ENCODE measurements at regions of chr17 and their contacts with region 1.

Region 1: GRCh38 chr17:50547035-50547735 is at the start of gene SPATA20:
- DNase-seq: peak; percentile 78 to 92
- H3K4me3 ChIP-seq: peak within 1 kb of the TSS; percentile 32 to 67 (median 57)
- H3K27ac ChIP-seq: no peak within 1 kb of the TSS; the same call in 1 of the 2 replicates
- H3K4me1 ChIP-seq: peaks cover 6 to 20% (median 13%) of the 10 kb centered on the region in 4 experiments
- H3K27me3 ChIP-seq: no peaks in the 10 kb centered on the region
- CTCF ChIP-seq: peak; percentile 94 to 97 (median 96)
- EP300 ChIP-seq: no peak
- POLR2A ChIP-seq: peak in 1 of 2 experiments; percentile 83; a peak in 2 of 3 replicates
- RAD21 ChIP-seq: peak; percentile 99
- total RNA-seq, gene SPATA20: 16.2 and 16.7 TPM in 2 replicates

Region 2: DNA sequence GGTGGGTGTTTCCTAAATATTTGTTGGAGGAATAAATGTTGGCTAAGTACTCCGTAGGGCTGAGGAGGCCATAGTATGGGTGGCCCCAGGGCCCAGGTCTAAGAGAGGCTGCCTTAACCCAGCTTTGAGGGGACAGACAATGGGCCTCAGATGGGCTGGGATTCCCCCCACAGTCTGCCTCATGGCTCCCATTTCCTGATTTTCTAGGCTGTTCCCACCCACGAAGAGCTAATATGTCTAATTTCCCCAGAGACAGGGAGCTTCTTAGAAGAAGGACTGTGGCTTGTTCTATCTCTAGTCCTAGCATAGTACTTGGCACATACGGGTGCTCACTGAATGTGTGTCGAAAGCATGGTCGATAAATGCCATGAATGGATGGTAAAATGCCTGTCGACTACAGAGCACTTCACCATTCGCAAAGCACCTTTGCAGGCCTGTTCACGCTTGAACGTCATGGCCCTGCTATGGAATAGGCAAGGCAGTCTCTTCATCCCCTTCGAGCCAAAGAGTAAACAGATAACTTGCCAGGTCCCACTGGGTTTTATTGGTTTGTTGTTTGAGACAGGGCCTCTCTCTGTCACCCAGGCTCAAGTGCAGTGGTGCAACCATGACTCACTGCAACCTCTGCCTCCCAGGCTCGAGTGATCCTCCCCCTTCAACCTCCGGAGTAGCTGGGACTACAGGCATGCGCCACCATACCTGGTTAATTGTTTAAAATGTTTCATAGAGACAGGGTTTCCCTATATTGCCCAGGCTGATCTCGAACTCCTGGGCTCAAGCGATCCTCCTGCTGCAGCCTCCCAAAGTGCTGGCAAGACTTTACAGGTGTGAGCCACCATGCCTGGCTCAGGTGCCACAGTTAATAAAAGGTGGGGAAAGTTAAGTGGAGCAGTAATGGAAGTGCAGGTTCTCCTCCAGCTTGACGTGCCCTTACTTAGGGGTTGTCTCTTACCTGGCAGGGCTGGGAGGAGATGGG is 88.2 kb before region 1 on chr17:
- CTCF ChIA-PET with region 1: no interaction called
- POLR2A ChIA-PET with region 1: no interaction called
- DNase-seq: no peak
- H3K4me3 ChIP-seq: no peak overlapping the region
- H3K27ac ChIP-seq: no peak overlapping the region
- H3K4me1 ChIP-seq: no peaks in the 10 kb centered on the region
- H3K27me3 ChIP-seq: no peaks in the 10 kb centered on the region
- CTCF ChIP-seq: no peak
- EP300 ChIP-seq: no peak
- POLR2A ChIP-seq: no peak
- RAD21 ChIP-seq: no peak

Region 3: GRCh38 chr17:50484371-50485155 is 62.6 kb before region 1 on chr17:
- CTCF ChIA-PET with region 1: interaction called, 42 read pairs
- POLR2A ChIA-PET with region 1: no interaction called
- DNase-seq: no peak
- H3K4me3 ChIP-seq: no peak overlapping the region
- H3K27ac ChIP-seq: no peak overlapping the region
- H3K4me1 ChIP-seq: peaks cover 0 to 5% (median 4%) of the 10 kb centered on the region in 4 experiments; a peak in 5 of 7 replicates
- H3K27me3 ChIP-seq: no peaks in the 10 kb centered on the region
- CTCF ChIP-seq: no peak
- EP300 ChIP-seq: no peak
- POLR2A ChIP-seq: no peak
- RAD21 ChIP-seq: no peak

Region 4: GRCh38 chr17:50575581-50576210 is 28.5 kb after region 1 on chr17:
- CTCF ChIA-PET with region 1: interaction called, 45 read pairs
- POLR2A ChIA-PET with region 1: no interaction called
- DNase-seq: peak in 1 of 2 experiments; percentile 73
- H3K4me3 ChIP-seq: no peak overlapping the region
- H3K27ac ChIP-seq: no peak overlapping the region
- H3K4me1 ChIP-seq: peaks cover 0 to 8% (median 5%) of the 10 kb centered on the region in 4 experiments; a peak in 4 of 7 replicates
- H3K27me3 ChIP-seq: no peaks in the 10 kb centered on the region
- CTCF ChIP-seq: peak; percentile 29 to 36 (median 36); a peak in 3 of 4 replicates
- EP300 ChIP-seq: no peak
- POLR2A ChIP-seq: no peak
- RAD21 ChIP-seq: peak in 1 of 2 experiments; percentile 31; a peak in 3 of 4 replicates

Region 5: DNA sequence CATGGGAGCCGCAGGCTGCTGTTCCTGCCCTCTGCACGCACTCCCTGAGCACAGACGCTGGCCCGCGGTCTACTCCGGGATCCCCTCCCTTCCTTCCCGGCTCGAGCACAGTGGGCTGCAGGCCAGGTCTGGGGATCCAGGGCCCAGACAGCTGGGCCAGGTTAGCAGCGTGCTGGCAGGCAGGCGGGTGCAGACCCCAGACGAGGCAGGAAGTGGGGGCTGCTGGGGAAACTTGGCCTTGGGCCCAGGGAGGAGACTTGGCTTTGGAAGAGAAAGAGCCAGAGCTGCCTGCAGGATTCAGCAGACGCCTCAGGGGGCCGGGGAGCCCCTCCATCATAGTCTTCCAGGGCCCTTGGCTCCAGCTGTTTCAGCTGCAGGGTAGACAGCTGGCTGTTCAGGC is 57.3 kb after region 1 on chr17:
- CTCF ChIA-PET with region 1: interaction called, 35 read pairs
- POLR2A ChIA-PET with region 1: no interaction called
- DNase-seq: no peak
- H3K4me3 ChIP-seq: no peak overlapping the region
- H3K27ac ChIP-seq: no peak overlapping the region
- H3K4me1 ChIP-seq: peaks cover 0 to 15% (median 4%) of the 10 kb centered on the region in 4 experiments; a peak in 5 of 7 replicates
- H3K27me3 ChIP-seq: no peaks in the 10 kb centered on the region
- CTCF ChIP-seq: no peak
- EP300 ChIP-seq: no peak
- POLR2A ChIP-seq: no peak
- RAD21 ChIP-seq: no peak

Region 6: DNA sequence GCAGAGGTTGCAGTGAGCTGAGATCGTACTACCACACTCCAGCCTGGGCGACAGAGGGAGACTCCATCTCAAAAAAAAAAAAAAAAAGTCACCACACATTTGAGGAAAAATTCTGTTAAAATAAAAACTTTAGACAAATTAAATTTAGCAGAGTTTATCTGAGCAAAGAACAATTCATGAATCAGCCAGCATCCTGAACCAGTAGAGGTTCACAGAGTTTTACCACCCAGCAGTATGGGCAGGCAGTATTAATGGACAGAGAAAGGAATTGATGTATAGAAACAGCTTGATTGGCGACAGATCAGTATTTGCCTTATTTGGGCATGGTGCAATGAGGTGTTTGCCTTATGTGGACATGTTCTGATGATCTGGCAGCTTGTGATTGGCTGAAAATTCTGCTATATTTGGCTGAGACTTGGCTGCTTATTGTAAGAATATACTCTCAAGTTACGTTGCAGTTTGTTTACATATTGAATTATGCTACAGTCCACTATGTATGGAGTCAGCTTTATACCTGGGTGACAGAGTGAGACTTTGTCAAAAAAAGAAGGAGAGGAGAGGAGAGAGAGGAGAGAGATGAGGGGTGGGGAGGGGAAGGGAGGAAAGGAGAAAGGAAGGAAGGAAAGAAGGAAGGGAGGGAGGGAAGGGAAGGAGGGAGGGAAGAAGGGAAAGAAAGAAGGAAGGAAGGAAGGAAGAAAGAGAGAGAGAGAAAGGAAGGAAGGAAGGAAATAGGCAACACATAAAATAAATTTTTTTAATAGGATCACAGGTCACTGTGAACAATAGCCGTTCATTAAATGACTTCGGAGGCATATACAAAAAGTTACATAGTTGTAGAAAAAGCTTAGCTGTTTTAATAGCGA is 102.1 kb after region 1 on chr17:
- CTCF ChIA-PET with region 1: interaction called, 10 read pairs
- POLR2A ChIA-PET with region 1: no interaction called
- DNase-seq: no peak
- H3K4me3 ChIP-seq: no peak overlapping the region
- H3K27ac ChIP-seq: no peak overlapping the region
- H3K4me1 ChIP-seq: no peaks in the 10 kb centered on the region
- H3K27me3 ChIP-seq: no peaks in the 10 kb centered on the region
- CTCF ChIP-seq: no peak
- EP300 ChIP-seq: no peak
- POLR2A ChIP-seq: no peak
- RAD21 ChIP-seq: no peak